Mammary epithelial cell (primary cell): ENCODE measurements at regions of chr9 and their contacts with region 1.

Region 1: GRCh38 chr9:87107072-87107471 is 159.8 kb upstream of the GAS1 start:
- DNase-seq: peak; percentile 93
- H3K4me3 ChIP-seq: no peak overlapping the region
- H3K27ac ChIP-seq: peak overlapping the region; percentile 84
- H3K4me1 ChIP-seq: peaks cover 37% of the 10 kb centered on the region
- H3K27me3 ChIP-seq: no peaks in the 10 kb centered on the region
- CTCF ChIP-seq: peak in 1 of 2 donors; percentile 39

Region 2: DNA sequence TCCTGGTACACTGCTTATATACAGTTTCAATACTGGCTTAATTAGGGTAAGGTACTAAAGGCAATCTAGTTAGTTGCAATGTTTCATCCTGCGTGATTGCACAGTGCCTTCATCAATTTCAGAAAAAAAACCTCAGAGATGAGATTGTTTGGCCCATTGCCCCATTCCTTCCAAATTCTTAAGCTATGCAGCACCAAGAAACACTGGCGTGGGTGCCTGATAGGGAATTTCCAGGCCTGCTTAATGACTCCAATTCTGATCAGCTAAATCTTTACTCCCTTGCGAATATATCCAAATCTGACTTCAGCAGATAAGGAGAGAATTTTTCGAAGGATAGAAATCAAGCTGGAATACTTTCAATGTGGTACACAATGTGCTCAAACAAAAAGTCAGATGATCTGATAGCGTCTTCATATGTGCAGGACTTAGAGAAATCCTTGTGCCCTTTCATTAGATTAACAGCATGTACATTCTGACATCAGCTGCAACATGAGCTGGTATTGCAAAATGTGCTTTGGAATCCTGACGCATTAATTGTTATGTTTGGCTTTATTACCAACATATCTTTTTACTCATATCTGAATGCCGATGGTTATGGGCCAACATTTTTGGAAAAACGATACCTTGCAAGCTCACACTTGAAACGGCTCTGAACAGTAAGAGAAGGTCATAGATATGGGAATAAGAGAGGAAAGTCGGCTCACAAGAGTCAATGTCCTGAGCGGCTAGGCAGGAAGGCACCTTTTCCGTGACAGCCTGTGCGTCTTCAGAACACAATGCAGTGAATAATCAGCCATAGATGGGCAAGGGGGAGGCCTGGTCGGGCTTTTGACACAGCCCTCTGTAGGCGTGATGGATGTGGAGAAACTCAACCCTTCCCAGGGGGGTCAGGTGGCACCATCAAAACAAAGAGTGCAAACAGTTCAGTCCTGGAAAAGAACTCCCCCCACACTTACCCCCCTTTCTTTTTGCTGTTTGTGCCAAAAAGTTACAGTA is 123.5 kb before region 1 on chr9:
- CTCF ChIA-PET with region 1: no interaction called
- dilution Hi-C with region 1: no loop called
- in situ Hi-C with region 1: no loop called
- intact Hi-C with region 1: loop called (anchors 1 kb)
- DNase-seq: peak; percentile 98
- H3K4me3 ChIP-seq: no peak overlapping the region
- H3K27ac ChIP-seq: peak overlapping the region; percentile 95
- H3K4me1 ChIP-seq: peaks cover 47% of the 10 kb centered on the region
- H3K27me3 ChIP-seq: no peaks in the 10 kb centered on the region
- CTCF ChIP-seq: no peak

Region 3: DNA sequence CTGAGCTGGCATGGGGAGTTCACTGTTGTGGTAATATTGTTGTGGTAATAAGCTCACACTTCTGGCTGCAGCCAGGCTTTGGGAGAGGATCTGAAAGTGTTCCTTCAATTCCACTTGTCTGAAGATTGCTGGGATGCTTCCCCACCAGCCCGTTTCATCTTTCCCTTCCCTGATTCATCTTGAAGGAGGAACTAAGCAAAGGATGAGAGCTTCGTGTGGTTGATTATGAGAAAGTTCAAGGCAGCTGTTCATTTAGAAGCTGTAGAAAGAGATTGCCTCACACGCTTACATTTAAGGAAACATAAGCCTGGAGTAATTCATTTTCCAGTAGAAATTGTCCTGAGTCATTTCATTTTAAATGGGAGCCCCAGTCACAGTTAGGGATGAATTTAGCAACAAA is 37.4 kb before region 1 on chr9:
- CTCF ChIA-PET with region 1: no interaction called
- dilution Hi-C with region 1: no loop called
- in situ Hi-C with region 1: no loop called
- intact Hi-C with region 1: loop called (anchors 1 kb)
- DNase-seq: no peak
- H3K4me3 ChIP-seq: no peak overlapping the region
- H3K27ac ChIP-seq: no peak overlapping the region
- H3K4me1 ChIP-seq: peaks cover 27% of the 10 kb centered on the region
- H3K27me3 ChIP-seq: no peaks in the 10 kb centered on the region
- CTCF ChIP-seq: no peak

Region 4: DNA sequence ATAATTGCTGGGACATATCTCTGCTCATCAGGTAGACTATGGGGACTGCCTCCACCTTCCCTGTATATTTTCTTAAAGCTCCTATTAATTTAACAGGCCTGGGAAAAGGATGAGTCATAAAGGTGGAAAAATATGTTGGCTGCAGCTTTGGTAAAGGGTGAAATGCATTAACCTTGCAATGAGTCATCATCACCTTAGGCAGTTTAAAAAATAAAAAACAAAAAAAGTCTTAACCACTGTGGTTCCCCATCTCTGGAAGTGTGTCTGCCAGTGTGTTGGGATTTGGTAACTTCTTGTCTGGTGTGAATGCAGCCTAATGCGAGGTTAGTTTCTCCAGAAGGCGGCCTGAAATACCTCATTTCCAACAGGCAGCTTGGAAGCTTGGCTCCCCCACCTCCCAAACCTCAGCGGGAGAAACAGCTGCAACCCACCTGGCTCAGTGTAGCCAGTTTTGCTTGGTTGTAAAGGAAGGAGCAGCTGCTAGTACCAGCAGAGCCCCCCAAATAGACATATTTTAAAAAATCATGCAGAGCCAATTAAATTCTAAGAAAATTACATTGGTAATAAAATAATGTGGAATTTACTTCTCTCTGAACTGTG is 105.6 kb after region 1 on chr9:
- CTCF ChIA-PET with region 1: no interaction called
- dilution Hi-C with region 1: loop called (anchors 5 kb)
- in situ Hi-C with region 1: no loop called
- intact Hi-C with region 1: no loop called
- DNase-seq: peak; percentile 94
- H3K4me3 ChIP-seq: no peak overlapping the region
- H3K27ac ChIP-seq: peak overlapping the region; percentile 22
- H3K4me1 ChIP-seq: peaks cover 23% of the 10 kb centered on the region
- H3K27me3 ChIP-seq: no peaks in the 10 kb centered on the region
- CTCF ChIP-seq: no peak